Activated naive CD4-positive, alpha-beta T cell treated with anti-CD3 and anti-CD28 coated beads for 36 hours (primary cell): ENCODE measurements at regions of chr10 and their contacts with region 1.

Region 1: DNA sequence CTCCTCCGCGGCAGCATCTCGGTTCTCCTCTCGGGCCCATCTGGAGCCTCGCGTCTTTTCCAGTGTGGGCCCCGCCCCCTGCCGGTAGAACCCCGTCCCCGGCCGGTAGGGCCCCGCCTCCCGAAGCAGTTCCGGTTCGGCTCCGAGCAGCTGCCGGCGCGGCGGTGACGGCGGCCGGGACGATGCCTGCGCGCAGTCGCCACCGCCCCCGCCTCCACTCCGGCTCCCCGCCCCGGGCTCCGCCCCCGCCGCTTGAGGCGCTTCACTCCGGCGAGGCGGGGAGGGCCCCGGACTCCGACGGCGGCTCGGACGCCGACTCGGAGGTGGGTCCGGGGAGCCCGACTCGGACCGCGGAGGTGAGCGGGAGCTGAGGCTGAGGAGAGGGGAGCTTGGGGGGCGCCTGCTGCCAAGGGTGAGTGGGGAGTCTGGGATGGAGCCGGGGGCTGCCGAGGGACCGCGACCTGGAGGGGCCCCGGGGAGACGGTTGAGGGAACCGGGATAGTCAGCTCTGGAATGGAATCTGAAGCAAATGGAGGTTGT is at the start of gene SAMD8:
- DNase-seq: peak; percentile 98
- H3K4me3 Mint-ChIP-seq: peak within 1 kb of the TSS; percentile 95
- H3K27ac Mint-ChIP-seq: peak within 1 kb of the TSS; percentile 97
- H3K4me1 Mint-ChIP-seq: peaks cover 44% of the 10 kb centered on the region
- H3K27me3 Mint-ChIP-seq: no peaks in the 10 kb centered on the region
- total RNA-seq, gene SAMD8: 15.3 to 16.9 TPM

Region 2: GRCh38 chr10:74151056-74151878 is 960.2 kb before region 1 on chr10 and contains the start of gene ADK:
- CTCF ChIA-PET with region 1: no interaction called
- intact Hi-C with region 1: loop called (anchors 1 kb)
- DNase-seq: peak; percentile 100
- H3K4me3 Mint-ChIP-seq: no peak within 1 kb of the TSS
- H3K27ac Mint-ChIP-seq: peak within 1 kb of the TSS; percentile 33
- H3K4me1 Mint-ChIP-seq: peaks cover 31% of the 10 kb centered on the region
- H3K27me3 Mint-ChIP-seq: no peaks in the 10 kb centered on the region
- total RNA-seq, gene ADK: 43.4 to 43.9 TPM

Region 3: DNA sequence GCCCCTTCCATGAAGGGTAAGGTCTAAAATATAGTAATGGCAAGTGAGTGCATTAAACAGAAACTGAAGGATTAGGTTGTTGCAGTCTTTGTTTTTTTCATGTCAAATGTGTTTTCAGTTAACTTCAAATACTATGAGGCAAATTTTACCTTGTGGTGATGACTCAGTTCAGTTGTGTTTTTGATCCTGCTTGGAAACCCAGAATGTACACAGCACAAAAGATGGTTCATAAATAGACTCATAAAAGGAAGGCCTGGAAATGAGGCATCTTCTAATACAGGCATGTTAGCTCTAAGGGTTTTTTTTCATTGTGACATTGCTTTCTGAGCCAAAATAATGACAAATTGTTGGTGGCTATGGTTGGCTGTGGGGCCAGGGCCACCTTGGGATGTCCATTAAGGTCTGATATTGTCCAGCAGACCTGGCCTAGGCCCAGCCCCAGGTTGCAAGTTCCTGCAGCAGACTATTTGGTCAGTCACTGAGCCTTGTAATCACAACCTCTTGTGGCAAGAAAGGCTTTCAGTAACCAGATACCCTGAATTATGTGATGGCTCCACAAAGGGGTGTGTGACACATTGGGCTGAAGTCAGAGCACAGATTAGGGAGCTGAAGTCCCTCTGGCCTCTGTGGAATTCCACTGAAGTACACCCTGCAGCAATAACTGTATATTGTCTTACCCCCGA is 69.0 kb before region 1 on chr10:
- CTCF ChIA-PET with region 1: no interaction called
- intact Hi-C with region 1: loop called (anchors 2 kb)
- DNase-seq: peak; percentile 30
- H3K4me3 Mint-ChIP-seq: peak overlapping the region; percentile 20
- H3K27ac Mint-ChIP-seq: peak overlapping the region; percentile 87
- H3K4me1 Mint-ChIP-seq: peaks cover 45% of the 10 kb centered on the region
- H3K27me3 Mint-ChIP-seq: peaks cover 7% of the 10 kb centered on the region

Region 4: DNA sequence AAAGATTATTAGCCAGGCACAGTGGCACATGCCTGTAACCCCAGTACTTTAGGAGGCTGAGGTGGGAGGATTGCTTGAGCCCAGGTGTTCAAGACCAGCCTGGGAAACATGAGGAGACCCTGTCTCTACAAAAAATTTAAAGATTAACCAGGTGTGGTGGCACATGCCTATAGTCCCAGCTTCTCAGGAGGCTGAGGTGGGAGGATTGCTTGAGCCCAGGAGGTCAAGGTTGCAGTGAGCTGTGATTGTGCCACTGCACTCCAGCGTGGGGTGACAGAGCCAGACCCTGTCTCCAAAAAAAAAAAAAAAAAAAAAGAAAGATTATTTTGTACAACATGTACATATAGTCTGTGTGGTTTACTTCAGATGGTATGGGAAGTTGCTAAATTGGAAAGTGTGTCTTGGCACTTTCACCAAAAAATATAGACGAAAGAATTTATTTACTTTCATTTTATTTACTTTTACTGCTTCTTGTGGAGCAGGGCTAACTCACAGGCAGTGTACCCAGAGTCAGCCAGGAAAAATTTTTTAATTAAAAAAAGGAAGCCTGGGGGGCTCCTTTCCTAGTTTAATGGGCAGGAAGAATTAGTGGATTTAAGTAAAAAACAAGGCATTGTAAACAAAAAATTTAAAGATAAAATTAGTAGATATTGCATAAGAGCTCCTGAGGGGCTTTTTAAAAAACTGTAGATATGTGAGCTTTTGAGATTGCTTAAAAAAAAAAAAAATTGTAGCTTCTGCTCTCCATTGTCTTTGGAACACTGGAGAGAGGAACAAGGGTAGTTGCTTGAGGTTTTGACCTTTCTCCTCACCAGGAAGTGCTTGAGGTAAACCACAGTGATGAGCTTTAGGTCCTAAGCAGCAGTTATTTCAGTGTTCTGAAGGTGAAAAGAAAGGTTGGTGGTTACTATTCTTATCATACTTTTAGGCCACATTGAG is 54.5 kb after region 1 on chr10:
- CTCF ChIA-PET with region 1: no interaction called
- intact Hi-C with region 1: loop called (anchors 5 kb)
- DNase-seq: peak; percentile 24
- H3K4me3 Mint-ChIP-seq: no peak overlapping the region
- H3K27ac Mint-ChIP-seq: peak overlapping the region; percentile 89
- H3K4me1 Mint-ChIP-seq: peaks cover 37% of the 10 kb centered on the region
- H3K27me3 Mint-ChIP-seq: no peaks in the 10 kb centered on the region

Region 5: DNA sequence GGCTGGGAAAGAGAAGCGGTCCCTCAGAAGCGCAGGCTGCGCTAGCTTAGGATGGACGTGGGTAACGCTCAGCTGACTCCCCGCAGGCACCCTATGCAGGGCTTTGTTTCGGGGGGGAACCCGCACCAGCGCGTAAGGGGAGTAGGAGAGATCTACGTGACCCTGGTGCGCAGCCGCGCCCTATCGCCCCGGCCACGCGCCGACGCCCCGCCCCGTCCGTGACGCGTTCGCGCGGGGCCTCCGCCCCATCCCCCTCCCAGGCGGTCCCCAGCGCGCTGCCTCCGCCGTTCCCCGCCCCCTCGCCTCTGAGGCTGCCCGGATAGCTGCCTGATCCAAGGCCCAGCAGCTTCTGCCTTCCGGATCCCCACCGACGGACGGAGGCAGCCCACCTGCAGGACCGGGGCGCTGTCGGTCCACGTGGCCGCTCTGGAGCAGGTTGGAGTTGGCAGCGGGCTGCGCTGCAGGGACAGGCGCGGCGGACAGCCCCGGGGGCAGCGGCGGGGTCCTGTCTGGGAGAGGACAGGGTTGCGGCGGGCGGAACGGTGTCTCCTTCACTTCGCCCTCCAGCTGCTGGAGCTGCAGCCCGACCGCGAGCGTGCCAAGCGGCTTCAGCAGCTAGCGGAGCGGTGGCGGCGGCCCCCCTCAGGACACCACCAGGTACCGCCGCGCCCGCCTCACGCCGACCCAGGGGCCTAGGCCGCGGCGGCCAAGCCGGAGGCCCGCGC is 99.0 kb after region 1 on chr10 and contains the start of gene VDAC2:
- CTCF ChIA-PET with region 1: interaction called, 5 read pairs
- intact Hi-C with region 1: loop called (anchors 1 kb)
- DNase-seq: peak; percentile 92
- H3K4me3 Mint-ChIP-seq: peak within 1 kb of the TSS; percentile 100
- H3K27ac Mint-ChIP-seq: peak within 1 kb of the TSS; percentile 99
- H3K4me1 Mint-ChIP-seq: peaks cover 42% of the 10 kb centered on the region
- H3K27me3 Mint-ChIP-seq: no peaks in the 10 kb centered on the region
- total RNA-seq, gene VDAC2: 193 TPM